ENCODE measurements at regions of chr3 and their contacts with region 1.

Region 1: DNA sequence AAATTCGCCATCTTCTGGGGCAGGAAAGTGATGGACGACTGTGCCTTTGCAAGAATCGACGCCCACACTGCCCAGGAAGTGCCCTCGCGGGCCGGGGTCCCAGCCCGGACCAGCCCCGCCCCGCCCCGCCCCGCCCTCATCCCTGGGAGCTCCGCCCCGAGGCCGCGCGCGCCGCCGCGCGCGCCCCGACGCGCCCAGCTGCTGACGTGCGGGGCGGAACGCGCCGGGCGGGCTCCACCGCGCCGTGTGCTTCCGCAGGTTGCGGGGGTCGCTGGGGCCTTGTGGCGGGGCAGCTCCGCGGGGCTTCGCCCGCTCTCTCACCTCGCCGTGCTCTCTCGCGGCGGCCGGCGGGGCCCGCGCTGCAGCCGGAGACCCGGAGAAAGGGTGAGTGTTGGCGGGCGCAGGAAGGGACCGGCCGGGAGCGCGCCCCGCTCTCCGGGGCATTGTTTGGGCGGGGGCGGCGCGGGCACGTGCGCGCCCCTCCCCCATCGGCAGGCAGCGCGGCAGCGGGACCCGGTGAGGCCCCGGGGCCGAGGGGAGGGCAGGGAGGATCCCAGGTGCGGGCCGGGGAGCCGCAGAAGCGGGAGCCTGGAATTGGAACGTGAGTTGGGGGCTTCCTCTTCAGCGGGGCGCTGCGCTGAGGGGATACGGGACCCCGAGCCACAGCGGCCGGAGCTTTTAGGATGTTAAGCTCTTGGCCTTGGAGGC is at the start of gene YEATS2:
- DNase-seq: peak in 1 of 2 donors; percentile 87
- H3K4me3 ChIP-seq: peak within 1 kb of the TSS; percentile 77
- CTCF ChIP-seq: no peak
- POLR2A ChIP-seq: no peak
- total RNA-seq, gene YEATS2: 14.0 to 24.1 (median 16.3) TPM

Region 2: DNA sequence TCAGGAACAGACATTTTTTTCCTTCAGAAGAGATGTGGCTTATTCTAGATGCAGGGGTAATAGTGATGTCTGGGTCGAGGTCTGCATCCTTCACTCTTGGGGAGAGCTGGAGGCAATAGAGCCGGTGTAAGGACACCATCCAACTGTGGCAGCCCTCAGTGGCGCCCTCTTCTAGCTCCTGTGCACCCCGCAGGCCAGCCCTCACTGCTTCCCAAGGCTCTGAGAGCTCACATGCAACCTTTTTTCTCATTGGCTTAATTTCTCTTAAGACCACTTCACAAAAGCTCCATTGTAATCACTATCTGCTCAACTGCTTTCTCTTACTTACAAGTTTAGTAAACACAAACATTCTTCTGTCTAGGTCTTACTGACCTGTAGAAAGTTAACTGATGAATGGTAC is 1110.3 kb after region 1 on chr3:
- intact Hi-C with region 1: loop called (anchors 5 kb)
- DNase-seq: no peak
- H3K4me3 ChIP-seq: no peak overlapping the region
- CTCF ChIP-seq: no peak
- POLR2A ChIP-seq: no peak

Region 3: DNA sequence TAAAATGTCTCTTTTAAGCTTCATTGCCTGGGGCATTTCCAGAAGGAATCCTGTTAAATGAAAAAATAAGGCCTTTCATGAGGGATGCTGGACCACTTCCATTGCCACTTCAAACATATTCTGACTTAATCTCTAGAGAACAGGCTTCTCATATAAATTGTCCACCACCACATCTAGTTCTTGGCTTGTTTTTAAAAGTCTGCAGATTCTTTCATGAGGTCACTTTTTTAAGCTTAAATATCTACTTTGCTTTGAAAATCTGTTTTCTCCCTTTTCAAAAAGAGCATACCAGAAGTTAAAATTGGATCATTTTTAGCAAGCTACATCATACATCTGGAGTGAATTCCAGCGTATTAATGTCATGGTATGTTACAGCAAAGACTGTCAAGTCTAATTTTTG is 1323.5 kb after region 1 on chr3:
- intact Hi-C with region 1: no loop called
- DNase-seq: no peak
- H3K4me3 ChIP-seq: no peak overlapping the region
- CTCF ChIP-seq: no peak
- POLR2A ChIP-seq: no peak